GM12878 (cell line): ENCODE measurements at regions of chr6 and their contacts with region 1.

Region 1: GRCh38 chr6:13454286-13455221 is 32.8 kb downstream of the GFOD1 start:
- DNase-seq: peak; percentile 56
- ATAC-seq: peak; percentile 74
- H3K4me3 ChIP-seq: no peak overlapping the region
- H3K27ac ChIP-seq: peak overlapping the region; percentile 71
- H3K4me1 ChIP-seq: peaks cover 48% of the 10 kb centered on the region
- H3K27me3 ChIP-seq: no peaks in the 10 kb centered on the region
- CTCF ChIP-seq: peak; percentile 27 to 58 (median 33); a peak in 3 of 6 replicates
- EP300 ChIP-seq: no peak
- POLR2A ChIP-seq: peak; percentile 51
- RAD21 ChIP-seq: peak; percentile 64

Region 2: DNA sequence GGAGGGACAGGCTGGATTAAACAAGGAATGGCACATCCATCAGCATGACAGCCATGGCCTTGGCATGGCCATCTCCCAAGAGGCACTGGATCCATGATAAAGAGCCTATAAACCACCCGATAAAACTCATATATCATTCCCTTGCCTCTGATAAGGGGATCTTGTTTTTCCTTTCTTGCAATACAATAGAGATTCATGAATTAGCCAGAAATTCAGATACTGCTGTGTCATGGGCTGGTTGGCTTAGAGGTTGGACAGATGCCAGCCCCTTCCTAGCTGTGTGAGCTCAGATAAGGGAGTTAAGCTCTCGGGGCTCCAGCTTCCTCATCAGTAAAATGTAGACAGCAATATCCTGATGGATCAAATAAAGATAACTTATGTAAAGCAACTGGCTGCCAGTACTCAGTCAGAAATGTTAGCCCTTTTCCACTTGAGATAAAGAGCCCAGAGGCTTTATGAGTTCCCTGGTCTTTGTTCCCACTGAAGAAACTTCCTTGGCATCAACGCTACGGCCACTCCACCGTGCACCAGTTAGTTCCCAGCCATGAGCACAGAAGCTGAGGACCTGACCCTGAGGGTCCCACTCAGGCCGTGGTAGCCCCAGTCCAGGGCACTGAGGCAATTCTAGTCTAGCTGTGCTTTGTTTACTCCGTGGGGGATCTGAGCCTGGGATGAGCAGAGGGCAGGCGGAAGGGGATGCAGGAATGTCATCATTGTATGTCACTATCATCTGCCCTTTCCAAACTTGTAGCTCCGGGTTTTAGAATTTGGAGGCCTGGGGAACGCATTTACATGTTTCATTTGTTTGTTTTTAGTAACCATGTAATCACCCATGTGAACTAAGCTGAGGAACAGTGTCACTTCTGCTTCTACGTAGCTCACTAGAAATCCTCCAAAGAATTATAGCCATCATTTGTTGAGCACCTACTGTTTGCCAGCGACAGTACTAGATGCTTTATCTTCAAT is 59.0 kb before region 1 on chr6:
- CTCF ChIA-PET with region 1: no interaction called
- POLR2A ChIA-PET with region 1: no interaction called
- RAD21 ChIA-PET with region 1: interaction called, 3 read pairs
- SMC1A ChIA-PET with region 1: interaction called, 31 read pairs
- in situ Hi-C with region 1: no loop called
- intact Hi-C with region 1: no loop called
- DNase-seq: no peak
- ATAC-seq: peak; percentile 65
- H3K4me3 ChIP-seq: no peak overlapping the region; the same call in 1 of the 2 replicates
- H3K27ac ChIP-seq: peak overlapping the region; percentile 76
- H3K4me1 ChIP-seq: peaks cover 38% of the 10 kb centered on the region
- H3K27me3 ChIP-seq: no peaks in the 10 kb centered on the region
- CTCF ChIP-seq: no peak
- EP300 ChIP-seq: 0 out of 4 replicates have a peak, but pooled peaks of 1 of the 2 experiments have one; percentile 45
- POLR2A ChIP-seq: no peak
- RAD21 ChIP-seq: no peak

Region 3: GRCh38 chr6:13466304-13467215 is 12.0 kb after region 1 on chr6:
- CTCF ChIA-PET with region 1: interaction called, 6 read pairs
- POLR2A ChIA-PET with region 1: interaction called, 21 read pairs
- RAD21 ChIA-PET with region 1: interaction called, 9 read pairs
- SMC1A ChIA-PET with region 1: interaction called, 43 read pairs
- in situ Hi-C with region 1: no loop called
- intact Hi-C with region 1: no loop called
- DNase-seq: no peak
- ATAC-seq: peak; percentile 73
- H3K4me3 ChIP-seq: no peak overlapping the region
- H3K27ac ChIP-seq: peak overlapping the region; percentile 41; the same call in 1 of the 2 replicates
- H3K4me1 ChIP-seq: peaks cover 46% of the 10 kb centered on the region
- H3K27me3 ChIP-seq: no peaks in the 10 kb centered on the region
- CTCF ChIP-seq: no peak
- EP300 ChIP-seq: no peak
- POLR2A ChIP-seq: no peak
- RAD21 ChIP-seq: no peak

Region 4: GRCh38 chr6:13487122-13488014 is 32.8 kb after region 1 on chr6 and contains the start of gene GFOD1:
- CTCF ChIA-PET with region 1: interaction called, 13 read pairs
- POLR2A ChIA-PET with region 1: interaction called, 21 read pairs
- RAD21 ChIA-PET with region 1: interaction called, 19 read pairs
- SMC1A ChIA-PET with region 1: interaction called, 38 read pairs
- in situ Hi-C with region 1: no loop called
- intact Hi-C with region 1: no loop called
- DNase-seq: no peak
- ATAC-seq: peak; percentile 80
- H3K4me3 ChIP-seq: peak within 1 kb of the TSS; percentile 100
- H3K27ac ChIP-seq: peak within 1 kb of the TSS; percentile 69
- H3K4me1 ChIP-seq: peaks cover 15% of the 10 kb centered on the region
- H3K27me3 ChIP-seq: no peaks in the 10 kb centered on the region
- CTCF ChIP-seq: no peak
- EP300 ChIP-seq: no peak
- POLR2A ChIP-seq: peak; percentile 86
- RAD21 ChIP-seq: no peak
- polyA plus RNA-seq, gene GFOD1: 6.5 to 7.9 TPM

Region 5: GRCh38 chr6:13538084-13538483 is 83.5 kb after region 1 on chr6:
- CTCF ChIA-PET with region 1: interaction called, 24 read pairs
- POLR2A ChIA-PET with region 1: interaction called, 3 read pairs
- RAD21 ChIA-PET with region 1: interaction called, 12 read pairs
- SMC1A ChIA-PET with region 1: interaction called, 23 read pairs
- in situ Hi-C with region 1: no loop called
- intact Hi-C with region 1: loop called (anchors 5 kb)
- DNase-seq: no peak
- ATAC-seq: peak; percentile 80
- H3K4me3 ChIP-seq: no peak overlapping the region
- H3K27ac ChIP-seq: no peak overlapping the region
- H3K4me1 ChIP-seq: no peaks in the 10 kb centered on the region
- H3K27me3 ChIP-seq: no peaks in the 10 kb centered on the region
- CTCF ChIP-seq: peak; percentile 27 to 49 (median 36); a peak in 4 of 6 replicates
- EP300 ChIP-seq: no peak
- POLR2A ChIP-seq: no peak
- RAD21 ChIP-seq: peak; percentile 61